GM12878 (cell line): ENCODE measurements at regions of chr1 and their contacts with region 1.

Region 1: GRCh38 chr1:235050911-235051360 is 77.7 kb downstream of the TOMM20 start:
- DNase-seq: no peak
- ATAC-seq: peak; percentile 78
- H3K4me3 ChIP-seq: no peak overlapping the region
- H3K27ac ChIP-seq: no peak overlapping the region
- H3K4me1 ChIP-seq: peaks cover 49% of the 10 kb centered on the region
- H3K27me3 ChIP-seq: no peaks in the 10 kb centered on the region
- CTCF ChIP-seq: no peak
- EP300 ChIP-seq: no peak
- POLR2A ChIP-seq: no peak
- RAD21 ChIP-seq: no peak

Region 2: GRCh38 chr1:235067263-235068172 is 16.6 kb after region 1 on chr1:
- CTCF ChIA-PET with region 1: interaction called, 6 read pairs
- POLR2A ChIA-PET with region 1: interaction called, 6 read pairs
- RAD21 ChIA-PET with region 1: interaction called, 31 read pairs
- SMC1A ChIA-PET with region 1: interaction called, 71 read pairs
- in situ Hi-C with region 1: no loop called
- intact Hi-C with region 1: no loop called
- DNase-seq: no peak
- ATAC-seq: no peak
- H3K4me3 ChIP-seq: no peak overlapping the region
- H3K27ac ChIP-seq: no peak overlapping the region
- H3K4me1 ChIP-seq: peaks cover 16% of the 10 kb centered on the region
- H3K27me3 ChIP-seq: no peaks in the 10 kb centered on the region
- CTCF ChIP-seq: no peak
- EP300 ChIP-seq: no peak
- POLR2A ChIP-seq: no peak
- RAD21 ChIP-seq: no peak